ENCODE measurements at regions of chr5 and their contacts with region 1.

Region 1: DNA sequence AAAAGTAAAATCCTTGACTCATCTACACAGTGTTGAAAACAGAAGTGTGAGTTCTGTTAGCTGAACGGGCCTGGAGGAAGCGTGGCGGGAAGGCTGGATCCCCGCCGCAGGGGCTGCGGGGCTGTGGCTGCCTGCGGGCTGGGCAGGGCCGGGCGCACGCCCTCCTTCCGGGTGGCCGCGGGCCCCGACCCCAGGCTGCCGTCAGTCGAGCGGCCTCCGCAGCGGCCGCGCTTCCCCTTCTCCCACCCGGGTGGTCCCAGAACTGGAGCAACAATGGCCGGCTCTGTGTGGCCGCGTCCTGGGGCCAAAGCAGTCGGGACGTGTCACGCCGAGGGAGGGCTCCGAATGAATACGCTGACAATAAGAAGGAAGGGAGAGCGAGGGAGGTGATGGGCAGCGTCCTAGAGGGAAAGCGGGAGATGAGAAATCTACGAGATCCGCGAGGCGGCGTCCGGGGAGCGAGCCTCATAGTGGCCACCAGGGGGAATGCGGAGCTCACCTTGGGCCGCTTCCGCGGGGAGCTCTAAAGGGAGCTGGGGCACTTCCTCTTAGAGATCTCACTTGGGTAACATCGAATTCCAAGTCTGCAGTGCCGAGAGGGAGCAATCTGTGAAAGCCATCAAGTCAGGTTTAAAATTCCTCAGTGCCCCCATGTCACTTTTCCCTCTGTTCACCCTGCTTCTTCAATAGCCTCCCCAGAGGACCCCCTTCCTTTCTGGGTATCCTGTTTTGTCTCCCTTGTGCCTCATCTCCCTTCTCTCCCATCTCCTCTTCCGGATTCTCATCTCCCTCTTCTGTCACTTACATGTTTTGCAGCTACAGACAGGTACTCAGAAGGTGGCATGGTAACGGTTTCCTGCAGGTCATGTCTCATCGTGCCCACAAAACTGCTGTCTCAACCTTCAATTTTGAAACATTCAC is 83.9 kb downstream of the SLC1A3 start:
- DNase-seq: peak; percentile 68 to 85 (median 81)
- H3K4me3 ChIP-seq: peak overlapping the region; percentile 34 to 81 (median 67)
- H3K27ac ChIP-seq: peak overlapping the region; percentile 44 to 97 (median 92)
- H3K27me3 ChIP-seq: no peaks in the 10 kb centered on the region
- CTCF ChIP-seq: peak in 55 of 56 donors; percentile 59 to 95 (median 85)

Region 2: GRCh38 chr5:36079200-36079761 is 611.0 kb before region 1 on chr5:
- intact Hi-C with region 1: loop called in 1 of 2 experiments (anchors 10 kb)
- DNase-seq: peak in 1 of 10 donors; percentile 12
- H3K4me3 ChIP-seq: peak overlapping the region in 18 of 59 donors; percentile 2 to 39 (median 28)
- H3K27ac ChIP-seq: no peak overlapping the region
- H3K27me3 ChIP-seq: peaks cover 0 to 16% (median 0%) of the 10 kb centered on the region in 45 donors
- CTCF ChIP-seq: peak in 55 of 56 donors; percentile 26 to 75 (median 61)

Region 3: GRCh38 chr5:36241631-36242533 is 448.4 kb before region 1 on chr5 and contains the start of gene NADK2:
- intact Hi-C with region 1: loop called (anchors 5 to 10 kb)
- DNase-seq: peak; percentile 89 to 96 (median 95)
- H3K4me3 ChIP-seq: peak within 1 kb of the TSS; percentile 73 to 97 (median 89)
- H3K27ac ChIP-seq: peak within 1 kb of the TSS; percentile 78 to 99 (median 97)
- H3K27me3 ChIP-seq: no peaks in the 10 kb centered on the region
- CTCF ChIP-seq: peak; percentile 37 to 90 (median 70)
- total RNA-seq, gene NADK2: 33.0 to 108 (median 60.6) TPM

Region 4: DNA sequence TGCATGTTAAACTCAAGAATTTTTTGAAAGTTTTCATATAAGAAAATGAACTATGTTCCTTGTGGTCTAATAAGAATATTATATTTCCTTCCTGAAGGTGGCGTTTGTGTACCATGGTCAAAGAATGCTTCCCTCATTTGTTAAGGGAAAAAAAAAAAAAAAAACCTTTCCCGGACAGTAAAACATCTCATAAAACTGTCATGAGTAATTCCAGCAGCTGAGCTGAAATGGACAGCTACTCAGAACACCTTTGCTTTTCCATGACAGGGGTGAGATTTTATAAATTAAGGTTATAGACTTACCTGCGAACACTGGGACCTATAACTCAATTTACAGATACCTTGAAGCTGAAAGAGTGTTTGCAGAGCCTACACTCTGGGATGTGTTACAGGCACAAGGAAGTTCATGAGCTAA is 275.4 kb before region 1 on chr5:
- intact Hi-C with region 1: loop called (anchors 1 kb)
- DNase-seq: no peak
- H3K4me3 ChIP-seq: no peak overlapping the region
- H3K27ac ChIP-seq: peak overlapping the region in 2 of 59 donors; percentile 8 to 38
- H3K27me3 ChIP-seq: no peaks in the 10 kb centered on the region
- CTCF ChIP-seq: peak; percentile 49 to 90 (median 72)

Region 5: GRCh38 chr5:36606428-36607113 is 83.7 kb before region 1 on chr5 and contains the start of gene SLC1A3:
- intact Hi-C with region 1: loop called (anchors 2 to 5 kb)
- DNase-seq: peak in 9 of 10 donors; percentile 7 to 72 (median 65)
- H3K4me3 ChIP-seq: peak within 1 kb of the TSS; percentile 42 to 85 (median 71)
- H3K27ac ChIP-seq: peak within 1 kb of the TSS; percentile 83 to 99 (median 96)
- H3K27me3 ChIP-seq: peaks cover 0 to 14% (median 0%) of the 10 kb centered on the region in 45 donors
- CTCF ChIP-seq: peak in 2 of 56 donors; percentile 3 to 4
- total RNA-seq, gene SLC1A3: 324 to 1,867 (median 637) TPM

Measured in dorsolateral prefrontal cortex (tissue), 120 donors.